ENCODE measurements at regions of chr15 and their contacts with region 1.

Region 1: DNA sequence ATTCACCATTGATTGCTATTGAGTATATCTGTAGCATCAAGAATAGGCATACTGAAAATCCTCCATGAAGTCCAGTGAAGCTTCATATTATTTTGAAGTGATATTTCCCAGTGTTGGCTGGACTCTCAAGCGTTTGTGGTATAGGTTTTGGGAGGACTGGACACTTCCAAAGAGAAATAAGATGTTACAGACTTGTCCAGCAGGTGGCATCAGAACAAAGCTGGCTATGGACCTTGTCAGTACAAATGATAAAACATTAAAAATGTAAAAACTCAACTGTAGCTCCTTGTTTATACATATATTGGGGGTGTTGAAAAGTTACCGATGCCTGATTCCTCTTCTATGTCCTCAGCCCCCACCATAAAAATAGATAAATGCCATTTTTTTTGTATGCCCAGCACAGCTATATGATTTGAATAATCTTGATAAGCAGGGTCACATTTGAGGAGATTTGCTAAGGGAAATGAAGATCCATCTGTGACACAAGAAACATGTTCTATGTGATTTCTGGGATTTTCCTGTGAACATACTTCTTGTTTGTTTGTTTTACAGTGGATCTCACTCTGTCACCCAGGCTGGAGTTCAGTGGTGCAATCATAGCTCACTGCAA is 54.5 kb upstream of the GOLGA6B start:
- DNase-seq: peak; percentile 54
- ATAC-seq: peak; percentile 89
- H3K4me3 ChIP-seq: no peak overlapping the region
- H3K27ac ChIP-seq: no peak overlapping the region
- H3K4me1 ChIP-seq: no peaks in the 10 kb centered on the region
- H3K27me3 ChIP-seq: no peaks in the 10 kb centered on the region
- CTCF ChIP-seq: peak; percentile 78

Region 2: DNA sequence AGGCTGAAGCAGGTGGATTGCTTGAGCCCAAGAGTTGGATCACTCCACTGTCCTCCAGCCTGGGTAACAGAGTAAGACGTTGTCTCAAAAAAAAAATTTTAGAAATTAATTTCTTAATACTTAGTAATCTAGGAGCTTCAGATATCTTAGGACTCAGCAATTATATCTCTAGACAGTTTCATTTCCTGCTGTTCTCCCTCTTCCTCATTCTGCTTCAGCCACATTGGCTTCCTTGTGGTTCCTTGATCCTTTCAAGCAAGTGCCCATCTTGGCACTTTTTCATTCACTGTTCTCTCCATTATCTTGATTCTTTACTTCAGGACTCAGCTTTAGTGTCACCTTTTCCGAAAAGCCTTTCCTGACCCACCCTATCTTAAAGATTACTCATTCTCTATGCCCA is 179.4 kb before region 1 on chr15:
- CTCF ChIA-PET with region 1: no interaction called
- POLR2A ChIA-PET with region 1: interaction called, 12 read pairs
- in situ Hi-C with region 1: no loop called
- intact Hi-C with region 1: no loop called
- DNase-seq: no peak
- ATAC-seq: no peak
- H3K4me3 ChIP-seq: no peak overlapping the region
- H3K27ac ChIP-seq: no peak overlapping the region
- H3K4me1 ChIP-seq: no peaks in the 10 kb centered on the region
- H3K27me3 ChIP-seq: peaks cover 4% of the 10 kb centered on the region; the same call in 1 of the 2 replicates
- CTCF ChIP-seq: no peak

Region 3: GRCh38 chr15:72671535-72671934 is 71.6 kb after region 1 on chr15:
- CTCF ChIA-PET with region 1: interaction called, 20 read pairs
- POLR2A ChIA-PET with region 1: no interaction called
- in situ Hi-C with region 1: no loop called
- intact Hi-C with region 1: loop called (anchors 2 kb)
- DNase-seq: no peak
- ATAC-seq: no peak
- H3K4me3 ChIP-seq: no peak overlapping the region
- H3K27ac ChIP-seq: no peak overlapping the region
- H3K4me1 ChIP-seq: peaks cover 5% of the 10 kb centered on the region
- H3K27me3 ChIP-seq: no peaks in the 10 kb centered on the region; the same call in 1 of the 2 replicates
- CTCF ChIP-seq: no peak

Region 4: GRCh38 chr15:72982714-72983113 is 382.8 kb after region 1 on chr15:
- CTCF ChIA-PET with region 1: no interaction called
- POLR2A ChIA-PET with region 1: no interaction called
- in situ Hi-C with region 1: no loop called
- intact Hi-C with region 1: no loop called
- DNase-seq: no peak
- ATAC-seq: no peak
- H3K4me3 ChIP-seq: no peak overlapping the region
- H3K27ac ChIP-seq: no peak overlapping the region
- H3K4me1 ChIP-seq: no peaks in the 10 kb centered on the region
- H3K27me3 ChIP-seq: 0 out of 2 replicates have a peak, but pooled peaks cover 2% of the 10 kb centered on the region
- CTCF ChIP-seq: no peak

Measured in Panc1 (cell line).